Dorsolateral prefrontal cortex (tissue), 120 donors: ENCODE measurements at regions of chr10 and their contacts with region 1.

Region 1: GRCh38 chr10:22988581-22989360 is 60.9 kb downstream of the ARMC3 start:
- DNase-seq: peak in 8 of 10 donors; percentile 34 to 70 (median 52)
- H3K4me3 ChIP-seq: peak overlapping the region in 43 of 59 donors; percentile 0 to 44 (median 24)
- H3K27ac ChIP-seq: peak overlapping the region in 44 of 59 donors; percentile 3 to 88 (median 60)
- H3K27me3 ChIP-seq: no peaks in the 10 kb centered on the region
- CTCF ChIP-seq: peak; percentile 88 to 100 (median 97)

Region 2: GRCh38 chr10:21495752-21496342 is 1492.9 kb before region 1 on chr10:
- intact Hi-C with region 1: loop called in 1 of 2 experiments (anchors 10 kb)
- DNase-seq: peak; percentile 73 to 94 (median 82)
- H3K4me3 ChIP-seq: peak overlapping the region; percentile 66 to 92 (median 85)
- H3K27ac ChIP-seq: peak overlapping the region in 58 of 59 donors; percentile 24 to 97 (median 90)
- H3K27me3 ChIP-seq: peaks cover 0 to 5% (median 0%) of the 10 kb centered on the region in 45 donors
- CTCF ChIP-seq: peak; percentile 81 to 100 (median 98)

Region 3: DNA sequence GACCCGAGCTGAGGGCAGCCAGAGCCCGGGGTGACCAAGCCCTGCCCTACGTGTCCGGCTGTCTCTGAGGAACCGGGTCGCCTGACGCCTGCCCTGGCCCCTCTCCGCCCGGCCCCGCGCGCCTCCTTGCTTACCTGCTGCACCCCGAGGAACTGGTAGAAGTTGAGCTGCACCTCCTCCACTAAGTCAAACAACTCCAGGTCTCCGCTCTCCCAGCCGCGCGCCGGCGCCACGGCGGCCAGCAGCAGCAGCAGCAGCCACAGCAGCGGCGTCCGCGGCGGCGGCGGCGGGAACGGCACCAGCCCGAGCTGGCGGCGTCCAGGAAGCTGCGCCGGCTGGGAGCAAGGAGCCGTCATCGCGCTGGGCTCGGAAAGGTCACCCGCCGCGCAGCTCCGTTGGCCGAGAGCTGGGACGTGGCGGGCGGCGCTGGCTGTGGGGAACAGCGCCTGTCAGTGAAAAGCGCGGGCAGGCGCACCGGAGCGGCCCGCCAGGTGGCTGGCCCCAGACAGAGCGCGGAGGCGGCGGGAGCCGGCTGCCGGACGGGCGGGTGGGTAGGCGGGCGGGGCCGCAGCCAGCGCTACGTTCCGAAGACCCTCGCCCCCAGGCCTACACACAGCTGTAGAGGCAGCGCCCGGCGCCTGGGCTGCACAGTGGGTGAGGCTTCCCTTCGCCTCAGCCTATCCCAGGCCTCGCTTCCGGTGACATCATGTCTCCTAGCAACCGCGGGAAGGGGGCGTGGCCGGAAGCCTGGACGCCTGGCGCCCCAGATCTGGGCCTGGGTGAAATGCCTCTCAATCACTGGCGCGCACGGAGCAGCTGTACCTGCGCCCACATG is 985.5 kb before region 1 on chr10 and contains the start of gene DNAJC1:
- intact Hi-C with region 1: loop called (anchors 5 kb)
- DNase-seq: peak; percentile 96 to 99 (median 98)
- H3K4me3 ChIP-seq: peak within 1 kb of the TSS; percentile 68 to 95 (median 83)
- H3K27ac ChIP-seq: peak within 1 kb of the TSS; percentile 49 to 95 (median 88)
- H3K27me3 ChIP-seq: no peaks in the 10 kb centered on the region
- CTCF ChIP-seq: peak in 39 of 56 donors; percentile 3 to 55 (median 26)
- total RNA-seq, gene DNAJC1: 9.1 to 29.3 (median 17.3) TPM

Region 4: GRCh38 chr10:22316285-22317120 is 672.3 kb before region 1 on chr10 and contains the start of gene COMMD3:
- intact Hi-C with region 1: loop called in 1 of 2 experiments (anchors 5 kb)
- DNase-seq: peak; percentile 78 to 91 (median 88)
- H3K4me3 ChIP-seq: peak within 1 kb of the TSS; percentile 63 to 98 (median 90)
- H3K27ac ChIP-seq: peak within 1 kb of the TSS; percentile 90 to 99 (median 97)
- H3K27me3 ChIP-seq: no peaks in the 10 kb centered on the region
- CTCF ChIP-seq: peak in 2 of 56 donors; percentile 2 to 25
- total RNA-seq, gene COMMD3: 26.2 to 65.4 (median 41.7) TPM

Region 5: GRCh38 chr10:22475651-22476600 is 512.8 kb before region 1 on chr10:
- intact Hi-C with region 1: loop called in 1 of 2 experiments (anchors 5 kb)
- DNase-seq: peak in 9 of 10 donors; percentile 40 to 74 (median 52)
- H3K4me3 ChIP-seq: peak overlapping the region; percentile 44 to 86 (median 66)
- H3K27ac ChIP-seq: peak overlapping the region in 50 of 59 donors; percentile 3 to 94 (median 66)
- H3K27me3 ChIP-seq: peaks cover 0 to 39% (median 2%) of the 10 kb centered on the region in 45 donors
- CTCF ChIP-seq: peak in 7 of 56 donors; percentile 4 to 34 (median 12)

Region 6: GRCh38 chr10:22615819-22616499 is 372.8 kb before region 1 on chr10:
- intact Hi-C with region 1: loop called (anchors 10 kb)
- DNase-seq: peak; percentile 23 to 98 (median 91)
- H3K4me3 ChIP-seq: peak overlapping the region in 30 of 59 donors; percentile 1 to 44 (median 26)
- H3K27ac ChIP-seq: peak overlapping the region in 58 of 59 donors; percentile 60 to 98 (median 93)
- H3K27me3 ChIP-seq: no peaks in the 10 kb centered on the region
- CTCF ChIP-seq: peak in 5 of 56 donors; percentile 9 to 27 (median 21)

Region 7: GRCh38 chr10:22854935-22855421 is 133.8 kb before region 1 on chr10:
- intact Hi-C with region 1: loop called in 1 of 2 experiments (anchors 10 kb)
- DNase-seq: no peak
- H3K4me3 ChIP-seq: no peak overlapping the region
- H3K27ac ChIP-seq: peak overlapping the region in 10 of 59 donors; percentile 0 to 98 (median 14)
- H3K27me3 ChIP-seq: no peaks in the 10 kb centered on the region
- CTCF ChIP-seq: no peak

Region 8: DNA sequence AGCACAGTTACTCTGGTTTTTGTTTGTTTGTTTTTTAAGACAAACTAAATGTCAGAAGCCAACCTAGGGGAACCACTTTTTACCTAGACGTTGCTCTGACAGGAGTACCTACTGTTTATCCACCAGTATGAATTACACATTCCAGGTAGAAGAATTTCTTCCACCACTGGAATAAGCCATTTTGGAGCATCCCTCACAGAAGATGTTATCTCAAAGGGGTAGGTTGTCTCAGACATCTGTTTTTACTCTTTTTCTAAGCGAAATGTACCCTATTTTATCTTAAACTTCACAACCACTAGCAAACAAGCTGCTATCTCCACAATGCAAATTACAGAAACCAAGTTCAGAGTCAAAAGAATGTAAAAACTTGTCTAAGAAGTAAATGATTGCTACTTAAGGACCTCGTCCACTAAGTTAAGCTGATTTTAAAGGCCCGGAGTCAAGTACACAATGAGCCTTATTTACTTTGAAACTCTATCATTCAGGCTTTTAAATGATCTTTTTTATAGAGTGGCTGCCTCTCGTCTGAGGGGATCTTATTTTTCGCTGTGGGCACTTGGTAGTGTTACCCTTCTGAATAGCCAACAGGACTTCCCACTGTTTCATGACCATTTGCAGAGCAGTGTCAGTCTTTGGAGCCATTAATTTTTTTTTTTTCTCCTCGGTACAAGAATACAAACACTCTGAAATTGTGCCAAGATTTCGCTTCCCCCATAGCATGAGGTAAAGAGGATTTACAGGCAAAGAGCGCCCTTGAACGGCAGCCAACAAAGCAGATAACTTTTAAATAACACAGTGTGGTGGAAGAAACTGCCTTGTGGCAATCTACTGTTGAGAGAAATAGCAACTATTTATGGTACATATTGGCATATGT is 76.6 kb before region 1 on chr10:
- intact Hi-C with region 1: no loop called
- DNase-seq: no peak
- H3K4me3 ChIP-seq: peak overlapping the region in 1 of 59 donors; percentile 14
- H3K27ac ChIP-seq: peak overlapping the region in 1 of 59 donors; percentile 3
- H3K27me3 ChIP-seq: no peaks in the 10 kb centered on the region
- CTCF ChIP-seq: no peak

Region 9: DNA sequence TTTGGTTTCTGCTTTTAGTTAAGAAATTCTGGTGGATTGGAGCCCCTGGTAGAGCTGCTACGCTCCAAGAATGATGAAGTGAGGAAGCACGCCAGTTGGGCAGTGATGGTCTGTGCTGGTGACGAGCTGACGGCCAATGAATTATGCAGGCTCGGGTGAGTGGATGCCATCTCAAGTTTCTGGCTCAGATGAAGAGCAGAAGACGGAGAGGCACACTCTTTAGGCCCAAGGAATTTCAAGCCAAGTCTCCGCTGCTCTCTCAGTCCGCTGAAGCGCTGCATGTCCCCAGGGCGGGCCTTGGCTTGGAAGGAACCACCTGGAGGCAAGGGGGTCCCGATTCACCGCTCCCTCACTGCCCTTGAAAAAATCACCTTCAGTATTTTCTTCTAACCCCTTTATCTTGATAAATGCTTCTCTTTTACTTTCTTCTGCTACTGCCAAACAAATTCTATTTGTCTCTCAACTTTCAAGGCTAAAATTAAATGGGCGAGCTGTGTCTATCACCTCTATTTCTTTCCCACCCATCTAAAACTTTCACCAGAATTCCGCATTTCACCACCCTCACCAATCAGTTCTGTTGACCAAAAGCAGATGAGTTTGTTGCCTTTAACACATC is 13.2 kb after region 1 on chr10:
- intact Hi-C with region 1: no loop called
- DNase-seq: no peak
- H3K4me3 ChIP-seq: no peak overlapping the region
- H3K27ac ChIP-seq: peak overlapping the region in 1 of 59 donors; percentile 21
- H3K27me3 ChIP-seq: no peaks in the 10 kb centered on the region
- CTCF ChIP-seq: no peak

Region 10: GRCh38 chr10:23015021-23015707 is 26.4 kb after region 1 on chr10:
- intact Hi-C with region 1: no loop called
- DNase-seq: no peak
- H3K4me3 ChIP-seq: no peak overlapping the region
- H3K27ac ChIP-seq: no peak overlapping the region
- H3K27me3 ChIP-seq: no peaks in the 10 kb centered on the region
- CTCF ChIP-seq: no peak